ENCODE measurements at regions of chr10 and their contacts with region 1.

Region 1: DNA sequence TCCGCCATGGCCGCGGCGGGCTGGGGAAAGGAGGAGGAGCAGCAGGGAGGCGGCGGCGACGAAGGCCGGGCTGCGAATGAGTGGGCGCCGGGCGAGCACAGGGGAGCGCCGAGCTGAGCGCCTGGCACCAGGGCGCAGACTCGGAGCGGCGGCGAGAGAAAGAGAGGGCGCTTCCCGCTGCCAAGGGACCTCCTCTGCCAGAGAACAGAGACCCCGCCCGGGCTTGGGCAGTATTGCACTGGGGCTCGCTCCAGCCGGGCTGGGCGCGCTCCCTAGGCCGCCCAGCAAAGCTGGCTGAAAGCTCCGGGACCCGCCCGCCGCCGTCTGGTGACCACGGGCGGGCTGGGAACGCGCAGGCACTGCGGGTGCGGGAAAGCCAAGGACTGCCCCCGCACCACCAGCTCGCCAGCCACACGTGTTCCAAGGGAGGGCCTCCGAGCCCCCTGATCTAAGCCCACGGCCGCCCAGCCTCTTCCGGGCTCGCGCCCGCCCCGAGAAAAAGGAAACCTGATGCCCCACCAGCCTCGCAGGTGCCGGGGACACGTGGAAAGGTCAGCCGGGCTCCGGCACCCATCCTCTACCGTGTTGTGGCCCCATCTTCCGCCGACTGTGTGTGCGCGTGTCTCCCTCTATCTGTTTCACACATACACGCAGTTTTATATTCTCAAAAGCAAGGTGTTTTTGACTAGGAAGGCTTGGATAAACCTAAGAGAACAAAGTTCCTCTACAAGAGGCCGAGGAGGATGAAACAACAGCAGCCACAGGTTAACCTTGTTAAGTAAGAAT is at the start of gene CCDC6:
- DNase-seq: peak; percentile 93 to 96
- ATAC-seq: peak; percentile 91 to 96 (median 96)
- H3K4me3 ChIP-seq: peak within 1 kb of the TSS; percentile 98
- H3K27ac ChIP-seq: peak within 1 kb of the TSS; percentile 97
- H3K4me1 ChIP-seq: peaks cover 28% of the 10 kb centered on the region
- H3K27me3 ChIP-seq: no peaks in the 10 kb centered on the region
- CTCF ChIP-seq: peak; percentile 76
- total RNA-seq, gene CCDC6: 14.5 to 40.1 (median 23.0) TPM

Region 2: DNA sequence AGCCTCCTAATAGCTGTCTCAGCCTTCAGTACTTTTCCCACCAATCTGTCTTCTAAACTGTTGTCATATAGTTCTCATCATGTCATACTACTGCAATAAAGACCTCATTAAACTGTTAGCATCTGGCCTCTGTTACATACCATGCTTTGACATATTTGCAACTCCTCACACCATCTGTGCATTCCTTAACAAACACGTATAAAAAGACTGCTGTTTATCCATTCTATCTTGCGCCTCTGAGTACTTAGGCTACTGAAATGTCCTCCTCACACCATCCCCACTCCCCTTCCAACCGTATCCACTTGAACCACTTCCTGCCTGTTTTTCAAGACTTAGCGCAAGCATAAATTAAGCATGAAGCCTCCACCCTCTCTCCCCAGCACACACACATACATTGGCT is 238.5 kb before region 1 on chr10:
- intact Hi-C with region 1: no loop called
- DNase-seq: no peak
- ATAC-seq: no peak
- H3K4me3 ChIP-seq: no peak overlapping the region
- H3K27ac ChIP-seq: no peak overlapping the region
- H3K4me1 ChIP-seq: no peaks in the 10 kb centered on the region
- H3K27me3 ChIP-seq: no peaks in the 10 kb centered on the region
- CTCF ChIP-seq: no peak

Region 3: DNA sequence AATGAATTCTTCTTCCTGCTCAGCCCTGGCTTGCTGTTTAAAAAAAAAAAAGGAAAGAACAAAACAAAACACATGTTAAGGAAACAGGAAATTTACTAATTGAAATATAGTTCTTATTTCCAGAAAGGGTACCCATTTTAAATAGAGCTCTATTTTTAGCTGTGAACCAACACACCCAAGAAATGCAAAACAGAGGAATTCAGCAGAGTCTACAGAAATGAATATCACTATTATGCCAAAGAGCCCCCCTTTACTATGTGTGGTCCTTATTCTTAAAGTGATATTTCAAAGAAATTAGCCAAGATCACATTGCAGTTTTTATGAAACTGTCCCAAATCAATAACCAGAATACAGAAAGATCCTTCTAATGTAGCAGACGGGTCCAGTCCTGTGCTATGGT is 53.9 kb before region 1 on chr10:
- intact Hi-C with region 1: loop called in 1 of 2 experiments (anchors 5 kb)
- DNase-seq: no peak
- ATAC-seq: no peak
- H3K4me3 ChIP-seq: no peak overlapping the region
- H3K27ac ChIP-seq: no peak overlapping the region
- H3K4me1 ChIP-seq: peaks cover 22% of the 10 kb centered on the region
- H3K27me3 ChIP-seq: no peaks in the 10 kb centered on the region
- CTCF ChIP-seq: no peak

Region 4: GRCh38 chr10:59865101-59865500 is 41.5 kb before region 1 on chr10:
- intact Hi-C with region 1: loop called in 1 of 2 experiments (anchors 5 kb)
- DNase-seq: no peak
- ATAC-seq: peak; percentile 78 to 85 (median 83)
- H3K4me3 ChIP-seq: no peak overlapping the region
- H3K27ac ChIP-seq: peak overlapping the region; percentile 13
- H3K4me1 ChIP-seq: peaks cover 27% of the 10 kb centered on the region
- H3K27me3 ChIP-seq: no peaks in the 10 kb centered on the region
- CTCF ChIP-seq: peak; percentile 55

Region 5: DNA sequence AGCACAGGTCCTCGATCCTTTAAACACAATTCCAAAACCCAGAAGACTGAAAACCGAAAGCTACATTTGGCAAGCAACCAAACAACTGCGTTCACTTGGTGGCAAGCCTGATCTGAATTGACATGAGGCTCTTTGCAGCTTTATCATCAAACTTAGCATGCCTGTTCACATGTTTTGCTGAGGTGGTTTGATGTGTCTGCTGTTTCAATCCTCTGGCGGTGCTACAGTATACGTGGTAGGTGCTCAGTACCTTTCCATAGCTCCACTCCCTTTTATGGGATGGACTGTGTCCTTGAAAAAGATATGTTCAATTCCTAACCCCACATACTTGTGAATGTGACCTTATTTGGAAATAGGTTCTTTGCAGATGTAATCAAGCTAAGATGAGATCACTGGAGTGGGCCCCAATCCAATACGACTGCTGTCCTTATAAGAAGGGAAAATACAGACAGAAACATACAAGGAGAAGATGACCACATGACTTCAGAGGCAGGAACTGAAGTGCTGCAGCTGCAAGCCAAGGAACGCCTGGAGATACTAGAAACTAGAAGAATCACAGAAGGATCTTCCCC is 33.6 kb before region 1 on chr10:
- intact Hi-C with region 1: loop called (anchors 2 to 5 kb)
- DNase-seq: peak in 1 of 2 donors; percentile 19
- ATAC-seq: peak in 2 of 4 donors; percentile 23 to 38
- H3K4me3 ChIP-seq: no peak overlapping the region
- H3K27ac ChIP-seq: peak overlapping the region; percentile 54
- H3K4me1 ChIP-seq: peaks cover 46% of the 10 kb centered on the region
- H3K27me3 ChIP-seq: no peaks in the 10 kb centered on the region
- CTCF ChIP-seq: no peak

Region 6: GRCh38 chr10:60032723-60033122 is 126.1 kb after region 1 on chr10:
- intact Hi-C with region 1: loop called (anchors 2 to 5 kb)
- DNase-seq: peak; percentile 24 to 58
- ATAC-seq: peak; percentile 89 to 94 (median 90)
- H3K4me3 ChIP-seq: no peak overlapping the region
- H3K27ac ChIP-seq: peak overlapping the region; percentile 88
- H3K4me1 ChIP-seq: peaks cover 25% of the 10 kb centered on the region
- H3K27me3 ChIP-seq: no peaks in the 10 kb centered on the region
- CTCF ChIP-seq: peak; percentile 63

Measured in psoas muscle (tissue), 8 donors.